ENCODE measurements at regions of chr1 and their contacts with region 1.

Region 1: GRCh38 chr1:109984456-109985275 is at the start of gene AHCYL1:
- DNase-seq: peak; percentile 99
- ATAC-seq: peak; percentile 96
- H3K4me3 ChIP-seq: peak within 1 kb of the TSS; percentile 63
- H3K27ac ChIP-seq: peak within 1 kb of the TSS; percentile 91
- H3K4me1 ChIP-seq: peaks cover 18% of the 10 kb centered on the region
- H3K27me3 ChIP-seq: no peaks in the 10 kb centered on the region
- CTCF ChIP-seq: peak; percentile 99
- POLR2A ChIP-seq: peak; percentile 97
- RAD21 ChIP-seq: peak; percentile 100
- total RNA-seq, gene AHCYL1: 73.9 and 76.0 TPM in 2 replicates

Region 2: DNA sequence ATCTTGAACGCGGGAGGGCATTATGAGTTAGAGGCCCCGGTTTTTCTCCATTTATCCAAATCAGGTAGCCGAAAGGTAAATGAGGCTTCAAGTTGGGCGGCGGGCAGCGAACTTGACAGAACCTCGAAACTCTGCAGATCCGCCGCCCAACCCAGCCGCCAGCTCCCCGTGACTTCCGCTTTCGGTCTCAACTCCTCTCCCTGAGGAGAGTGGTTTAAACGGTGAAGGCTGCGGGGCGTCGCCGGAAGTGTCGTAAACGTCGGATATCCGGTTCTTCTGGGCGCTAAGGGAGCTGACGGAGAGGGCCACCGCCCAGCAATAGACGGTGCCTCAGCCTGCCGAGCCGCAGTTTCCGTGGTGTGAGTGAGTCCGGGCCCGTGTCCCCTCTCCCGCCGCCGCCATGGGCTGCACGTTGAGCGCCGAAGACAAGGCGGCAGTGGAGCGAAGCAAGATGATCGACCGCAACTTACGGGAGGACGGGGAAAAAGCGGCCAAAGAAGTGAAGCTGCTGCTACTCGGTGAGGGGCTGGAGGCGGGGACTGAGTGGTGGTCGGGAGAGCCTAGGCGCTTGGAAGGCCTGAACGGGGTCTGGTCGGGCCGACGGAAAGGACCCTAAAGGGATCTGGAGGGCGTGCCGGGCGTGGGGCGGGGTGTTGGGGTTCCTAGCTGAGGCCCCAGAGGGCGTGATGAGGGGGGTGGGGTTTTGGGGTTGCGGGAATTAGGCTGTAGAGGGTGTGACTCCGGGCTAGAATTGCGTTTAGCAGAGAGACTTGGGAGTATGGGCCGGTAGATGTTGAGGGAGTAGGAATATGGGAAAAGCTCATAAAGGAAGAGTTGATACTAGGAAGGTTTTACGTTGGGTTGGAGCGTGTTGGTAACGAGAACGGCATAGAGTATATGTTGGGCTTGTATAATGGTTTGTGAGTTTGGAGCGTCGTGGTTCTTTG is 436.1 kb before region 1 on chr1 and contains the start of gene GNAI3:
- CTCF ChIA-PET with region 1: interaction called, 10 read pairs
- POLR2A ChIA-PET with region 1: interaction called, 5 read pairs
- dilution Hi-C with region 1: no loop called
- in situ Hi-C with region 1: loop called (anchors 5 kb)
- intact Hi-C with region 1: loop called (anchors 1 kb)
- DNase-seq: peak; percentile 96
- ATAC-seq: peak; percentile 93
- H3K4me3 ChIP-seq: peak within 1 kb of the TSS; percentile 66
- H3K27ac ChIP-seq: peak within 1 kb of the TSS; percentile 94
- H3K4me1 ChIP-seq: peaks cover 4% of the 10 kb centered on the region
- H3K27me3 ChIP-seq: no peaks in the 10 kb centered on the region
- CTCF ChIP-seq: no peak
- POLR2A ChIP-seq: peak; percentile 97
- RAD21 ChIP-seq: peak; percentile 15; the same call in 1 of the 2 replicates
- total RNA-seq, gene GNAI3: 14.9 and 25.0 TPM in 2 replicates

Region 3: DNA sequence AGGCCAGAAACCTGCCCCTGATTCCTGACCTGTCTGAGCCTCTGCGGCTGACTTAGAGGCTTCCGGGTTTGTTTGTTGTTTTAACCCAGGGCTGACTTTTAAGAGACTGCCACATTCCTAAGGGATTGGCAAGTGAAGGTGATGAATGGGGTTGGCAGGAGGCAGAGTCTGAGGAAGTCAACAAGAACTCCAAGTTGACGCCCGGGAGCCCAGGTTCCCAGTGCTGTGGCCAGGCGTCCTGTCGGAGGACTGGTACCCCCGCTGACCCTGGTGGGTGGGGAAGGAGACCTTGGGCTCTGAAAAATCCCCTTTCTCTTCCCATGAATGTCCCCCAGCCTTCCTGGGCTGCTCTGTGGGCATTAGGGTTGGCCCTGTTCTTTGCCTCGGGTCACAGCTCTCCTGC is 201.2 kb before region 1 on chr1:
- CTCF ChIA-PET with region 1: interaction called, 69 read pairs
- POLR2A ChIA-PET with region 1: no interaction called
- dilution Hi-C with region 1: no loop called
- in situ Hi-C with region 1: loop called (anchors 5 kb)
- intact Hi-C with region 1: no loop called
- DNase-seq: peak; percentile 76
- ATAC-seq: peak; percentile 47
- H3K4me3 ChIP-seq: no peak overlapping the region
- H3K27ac ChIP-seq: peak overlapping the region; percentile 30
- H3K4me1 ChIP-seq: peaks cover 27% of the 10 kb centered on the region
- H3K27me3 ChIP-seq: no peaks in the 10 kb centered on the region
- CTCF ChIP-seq: no peak
- POLR2A ChIP-seq: no peak
- RAD21 ChIP-seq: no peak

Region 4: GRCh38 chr1:109816175-109816811 is 168.4 kb before region 1 on chr1:
- CTCF ChIA-PET with region 1: no interaction called
- POLR2A ChIA-PET with region 1: no interaction called
- dilution Hi-C with region 1: no loop called
- in situ Hi-C with region 1: no loop called
- intact Hi-C with region 1: no loop called
- DNase-seq: no peak
- ATAC-seq: no peak
- H3K4me3 ChIP-seq: no peak overlapping the region
- H3K27ac ChIP-seq: no peak overlapping the region
- H3K4me1 ChIP-seq: peaks cover 5% of the 10 kb centered on the region
- H3K27me3 ChIP-seq: no peaks in the 10 kb centered on the region
- CTCF ChIP-seq: no peak
- POLR2A ChIP-seq: no peak
- RAD21 ChIP-seq: no peak

Region 5: GRCh38 chr1:109910123-109910962 is 74.3 kb before region 1 on chr1 and contains the start of gene CSF1:
- CTCF ChIA-PET with region 1: interaction called, 9 read pairs
- POLR2A ChIA-PET with region 1: no interaction called
- dilution Hi-C with region 1: no loop called
- in situ Hi-C with region 1: loop called (anchors 5 kb)
- intact Hi-C with region 1: loop called (anchors 2 kb)
- DNase-seq: peak; percentile 86
- ATAC-seq: peak; percentile 68
- H3K4me3 ChIP-seq: peak within 1 kb of the TSS; percentile 98
- H3K27ac ChIP-seq: peak within 1 kb of the TSS; percentile 85
- H3K4me1 ChIP-seq: peaks cover 25% of the 10 kb centered on the region
- H3K27me3 ChIP-seq: no peaks in the 10 kb centered on the region; the same call in 1 of the 2 replicates
- CTCF ChIP-seq: no peak
- POLR2A ChIP-seq: peak; percentile 84
- RAD21 ChIP-seq: peak; percentile 4; the same call in 1 of the 2 replicates
- total RNA-seq, gene CSF1: 9.4 and 14.3 TPM in 2 replicates

Region 6: GRCh38 chr1:109959974-109960744 is 24.5 kb before region 1 on chr1:
- CTCF ChIA-PET with region 1: interaction called, 6 read pairs
- POLR2A ChIA-PET with region 1: interaction called, 18 read pairs
- dilution Hi-C with region 1: no loop called
- in situ Hi-C with region 1: no loop called
- intact Hi-C with region 1: no loop called
- DNase-seq: peak; percentile 78
- ATAC-seq: peak; percentile 99
- H3K4me3 ChIP-seq: no peak overlapping the region
- H3K27ac ChIP-seq: peak overlapping the region; percentile 92
- H3K4me1 ChIP-seq: peaks cover 13% of the 10 kb centered on the region
- H3K27me3 ChIP-seq: no peaks in the 10 kb centered on the region
- CTCF ChIP-seq: no peak; the same call in 1 of the 2 replicates
- POLR2A ChIP-seq: no peak
- RAD21 ChIP-seq: no peak

Region 7: DNA sequence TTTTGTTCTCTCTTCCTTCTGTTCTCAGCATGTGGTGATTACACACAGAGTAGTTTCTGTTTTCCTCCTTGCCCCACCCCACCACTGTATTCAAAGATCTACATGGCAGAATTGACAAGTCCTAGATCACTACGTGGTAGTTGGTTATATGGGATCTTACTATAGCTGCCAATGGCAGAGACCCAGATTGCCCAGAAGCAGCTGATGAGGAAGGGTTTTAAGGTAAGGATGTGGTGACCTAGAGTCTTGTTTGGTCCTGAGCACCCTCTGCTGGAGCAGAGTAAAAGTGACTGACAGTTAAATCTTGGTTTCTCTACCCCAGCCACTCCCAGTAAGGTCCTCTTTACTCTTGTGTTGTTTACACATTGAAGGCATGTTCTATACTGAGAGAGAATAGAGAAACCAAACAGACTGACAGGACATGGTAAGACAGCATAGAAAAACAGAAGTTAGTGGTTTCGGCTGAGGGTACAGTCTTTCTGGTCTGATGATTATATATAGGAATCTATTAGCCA is 26.9 kb after region 1 on chr1:
- CTCF ChIA-PET with region 1: interaction called, 16 read pairs
- POLR2A ChIA-PET with region 1: no interaction called
- dilution Hi-C with region 1: no loop called
- in situ Hi-C with region 1: no loop called
- intact Hi-C with region 1: no loop called
- DNase-seq: peak; percentile 73
- ATAC-seq: peak; percentile 96
- H3K4me3 ChIP-seq: no peak overlapping the region
- H3K27ac ChIP-seq: no peak overlapping the region
- H3K4me1 ChIP-seq: peaks cover 7% of the 10 kb centered on the region
- H3K27me3 ChIP-seq: no peaks in the 10 kb centered on the region
- CTCF ChIP-seq: peak; percentile 66
- POLR2A ChIP-seq: no peak
- RAD21 ChIP-seq: peak; percentile 73

Region 8: DNA sequence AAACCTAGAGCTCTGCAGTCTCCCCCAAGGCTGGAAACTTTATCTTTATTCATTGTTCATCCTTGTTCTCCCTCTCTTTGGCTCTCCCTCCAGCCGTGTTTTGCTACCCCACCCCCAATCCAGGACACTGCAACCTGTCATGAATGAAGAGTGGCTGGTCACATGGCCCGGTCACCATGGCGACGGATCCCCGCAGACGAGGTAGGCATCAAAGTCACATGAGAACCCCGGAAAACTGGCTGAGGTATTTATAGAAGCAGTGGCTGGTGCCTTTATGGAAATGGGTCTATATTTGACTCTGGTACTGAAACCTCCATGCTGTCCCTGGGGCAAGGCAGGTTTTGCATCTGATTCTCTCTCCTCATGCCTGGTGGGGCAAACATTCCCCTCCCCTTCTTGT is 152.2 kb after region 1 on chr1:
- CTCF ChIA-PET with region 1: no interaction called
- POLR2A ChIA-PET with region 1: no interaction called
- dilution Hi-C with region 1: no loop called
- in situ Hi-C with region 1: no loop called
- intact Hi-C with region 1: no loop called
- DNase-seq: no peak
- ATAC-seq: no peak
- H3K4me3 ChIP-seq: no peak overlapping the region
- H3K27ac ChIP-seq: no peak overlapping the region
- H3K4me1 ChIP-seq: no peaks in the 10 kb centered on the region
- H3K27me3 ChIP-seq: peaks cover 55% of the 10 kb centered on the region
- CTCF ChIP-seq: no peak
- POLR2A ChIP-seq: no peak
- RAD21 ChIP-seq: no peak

Region 9: DNA sequence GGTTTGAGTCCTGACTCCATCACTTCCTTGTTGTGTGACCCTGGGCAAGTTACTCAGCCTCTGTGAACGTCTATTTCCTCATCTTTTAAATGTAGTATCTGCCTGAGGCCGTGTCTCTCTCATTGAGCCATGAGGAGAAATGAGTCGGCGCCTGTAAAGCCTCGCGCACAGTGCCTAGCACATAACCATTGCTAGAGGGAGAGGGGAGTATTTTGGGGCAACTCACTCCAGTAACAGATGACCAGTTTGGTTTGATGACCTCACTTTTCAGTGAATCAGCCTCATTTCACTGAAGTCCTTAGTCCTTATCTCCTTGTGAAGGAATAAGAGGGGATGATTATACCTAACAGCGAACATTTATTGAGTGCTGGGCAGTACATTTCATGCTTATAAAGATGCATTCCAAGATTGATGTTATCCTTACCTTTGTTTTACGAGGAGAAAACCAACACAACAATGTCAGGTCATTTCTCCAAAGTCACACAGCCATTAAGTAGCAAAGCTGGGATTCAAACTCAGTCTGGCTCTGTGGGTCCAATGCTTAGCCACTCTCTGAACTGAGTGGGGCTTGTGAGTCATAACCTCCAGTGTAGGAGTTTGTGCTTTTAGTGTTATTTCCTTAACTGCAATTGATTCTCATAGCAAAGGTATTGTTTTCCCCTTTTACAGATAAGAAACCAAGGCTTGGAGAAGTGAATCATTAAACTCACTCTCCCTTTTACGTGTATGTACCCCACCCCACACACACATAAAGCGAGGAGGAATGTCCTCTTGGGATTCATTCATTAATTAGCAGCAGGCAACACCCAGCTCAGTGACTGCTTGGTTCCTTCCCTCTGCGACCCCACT is 251.4 kb after region 1 on chr1:
- CTCF ChIA-PET with region 1: no interaction called
- POLR2A ChIA-PET with region 1: no interaction called
- dilution Hi-C with region 1: no loop called
- in situ Hi-C with region 1: no loop called
- intact Hi-C with region 1: no loop called
- DNase-seq: peak; percentile 85
- ATAC-seq: peak; percentile 76
- H3K4me3 ChIP-seq: no peak overlapping the region
- H3K27ac ChIP-seq: no peak overlapping the region
- H3K4me1 ChIP-seq: peaks cover 6% of the 10 kb centered on the region; the same call in 1 of the 2 replicates
- H3K27me3 ChIP-seq: peaks cover 12% of the 10 kb centered on the region
- CTCF ChIP-seq: no peak
- POLR2A ChIP-seq: no peak
- RAD21 ChIP-seq: no peak

Region 10: GRCh38 chr1:111099289-111099688 is 1114.6 kb after region 1 on chr1:
- CTCF ChIA-PET with region 1: no interaction called
- POLR2A ChIA-PET with region 1: no interaction called
- dilution Hi-C with region 1: no loop called
- in situ Hi-C with region 1: no loop called
- intact Hi-C with region 1: no loop called
- DNase-seq: no peak
- ATAC-seq: no peak
- H3K4me3 ChIP-seq: no peak overlapping the region
- H3K27ac ChIP-seq: no peak overlapping the region
- H3K4me1 ChIP-seq: no peaks in the 10 kb centered on the region
- H3K27me3 ChIP-seq: no peaks in the 10 kb centered on the region
- CTCF ChIP-seq: no peak
- POLR2A ChIP-seq: no peak
- RAD21 ChIP-seq: no peak

Measured in IMR-90 (cell line).